CD4-positive, alpha-beta memory T cell (primary cell): ENCODE measurements at regions of chr6 and their contacts with region 1.

Region 1: DNA sequence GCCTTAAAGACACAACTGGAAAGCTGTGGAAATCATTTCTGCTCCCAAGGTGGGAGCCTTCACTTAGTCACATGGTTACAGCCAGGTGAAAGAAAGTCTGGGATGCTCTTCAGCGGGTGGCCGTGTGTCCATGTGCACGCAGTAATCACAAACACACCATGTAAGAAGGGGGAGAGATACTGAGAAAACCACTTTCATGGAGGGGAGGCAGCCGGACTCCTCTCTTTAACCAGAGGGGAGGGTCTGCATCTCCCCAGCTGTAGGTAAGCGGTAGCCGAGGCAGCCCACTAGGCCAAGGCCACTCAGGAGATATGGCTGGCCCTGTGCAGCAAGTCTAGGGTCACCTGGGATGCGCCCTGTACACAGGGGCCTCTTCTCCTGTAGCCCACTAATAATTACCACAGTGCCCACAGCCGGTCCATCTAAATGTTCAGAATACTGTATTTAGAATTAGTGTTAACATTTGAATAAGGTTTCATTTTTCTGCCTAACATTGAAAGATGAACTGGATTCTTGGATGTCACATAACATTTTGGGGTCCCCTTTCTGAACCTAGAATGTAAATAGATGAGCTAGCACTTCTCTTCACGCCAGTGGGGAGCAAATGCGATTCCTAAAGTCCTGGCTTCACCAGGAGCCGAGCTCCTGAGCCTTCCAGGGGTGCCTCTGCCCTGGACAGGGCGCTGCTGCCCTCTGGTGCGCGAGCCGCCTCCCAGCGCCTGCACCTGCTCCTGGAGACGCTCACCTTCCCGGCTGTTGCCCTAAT is 15.9 kb downstream of the GPR31 start:
- DNase-seq: peak in 4 of 5 donors; percentile 54 to 62 (median 56)
- H3K4me3 ChIP-seq: no peak overlapping the region
- H3K4me3 Mint-ChIP-seq: peak overlapping the region in 2 of 8 donors; percentile 63 to 69
- H3K27ac ChIP-seq: no peak overlapping the region
- H3K27ac Mint-ChIP-seq: peak overlapping the region; percentile 72 to 91 (median 81)
- H3K4me1 ChIP-seq: peaks cover 17% of the 10 kb centered on the region
- H3K4me1 Mint-ChIP-seq: peaks cover 24 to 51% (median 29%) of the 10 kb centered on the region in 4 donors
- H3K27me3 ChIP-seq: no peaks in the 10 kb centered on the region
- H3K27me3 Mint-ChIP-seq: peaks cover 0 to 2% of the 10 kb centered on the region in 2 donors

Region 2: DNA sequence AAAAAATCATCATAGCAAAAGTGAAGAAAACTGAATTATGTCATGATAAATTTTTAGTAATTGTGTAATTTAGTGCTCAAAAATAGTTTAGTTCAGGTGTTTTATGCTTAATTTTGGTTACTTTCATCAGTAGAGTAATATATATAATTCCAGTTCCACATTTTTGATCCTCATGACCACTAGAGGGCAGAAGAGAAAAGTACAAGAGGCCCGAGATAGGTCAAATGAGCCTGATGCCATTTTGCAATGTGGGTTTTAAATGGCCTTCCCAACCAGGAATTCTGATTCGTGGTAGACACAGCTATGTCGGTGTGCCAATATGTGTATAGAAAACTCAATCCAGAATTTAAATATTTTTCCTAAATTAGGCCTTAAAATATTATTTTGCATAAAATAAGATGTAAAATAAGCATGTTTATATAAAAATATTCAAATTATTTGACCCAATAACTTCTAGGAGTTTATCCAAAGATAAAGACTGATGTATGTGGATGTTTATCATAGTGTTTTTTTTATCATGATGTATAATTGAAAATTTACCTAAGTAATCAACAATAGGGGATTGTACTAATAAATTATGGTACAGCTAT is 355.1 kb before region 1 on chr6:
- CTCF ChIA-PET with region 1: interaction called, 23 read pairs
- POLR2A ChIA-PET with region 1: no interaction called
- intact Hi-C with region 1: loop called (anchors 1 kb)
- DNase-seq: peak in 4 of 5 donors; percentile 60 to 66 (median 62)
- H3K4me3 ChIP-seq: no peak overlapping the region
- H3K4me3 Mint-ChIP-seq: no peak overlapping the region
- H3K27ac ChIP-seq: no peak overlapping the region
- H3K27ac Mint-ChIP-seq: no peak overlapping the region
- H3K4me1 ChIP-seq: no peaks in the 10 kb centered on the region
- H3K4me1 Mint-ChIP-seq: no peaks in the 10 kb centered on the region
- H3K27me3 ChIP-seq: no peaks in the 10 kb centered on the region
- H3K27me3 Mint-ChIP-seq: no peaks in the 10 kb centered on the region

Region 3: GRCh38 chr6:166900956-166901607 is 240.8 kb before region 1 on chr6:
- CTCF ChIA-PET with region 1: no interaction called
- POLR2A ChIA-PET with region 1: no interaction called
- intact Hi-C with region 1: no loop called
- DNase-seq: no peak
- H3K4me3 ChIP-seq: no peak overlapping the region
- H3K4me3 Mint-ChIP-seq: no peak overlapping the region
- H3K27ac ChIP-seq: no peak overlapping the region
- H3K27ac Mint-ChIP-seq: peak overlapping the region in 1 of 7 donors; percentile 75
- H3K4me1 ChIP-seq: no peaks in the 10 kb centered on the region
- H3K4me1 Mint-ChIP-seq: peaks cover 0 to 10% (median under 1%) of the 10 kb centered on the region in 4 donors
- H3K27me3 ChIP-seq: no peaks in the 10 kb centered on the region
- H3K27me3 Mint-ChIP-seq: no peaks in the 10 kb centered on the region

Region 4: GRCh38 chr6:166999145-166999883 is 142.5 kb before region 1 on chr6 and contains the start of gene CEP43:
- CTCF ChIA-PET with region 1: interaction called, 40 read pairs
- POLR2A ChIA-PET with region 1: interaction called, 6 read pairs
- intact Hi-C with region 1: loop called (anchors 1 kb)
- DNase-seq: peak; percentile 81 to 89 (median 87)
- H3K4me3 ChIP-seq: peak within 1 kb of the TSS; percentile 85 to 95
- H3K4me3 Mint-ChIP-seq: peak within 1 kb of the TSS; percentile 90 to 95 (median 94)
- H3K27ac ChIP-seq: peak within 1 kb of the TSS; percentile 81
- H3K27ac Mint-ChIP-seq: peak within 1 kb of the TSS; percentile 65 to 93 (median 91)
- H3K4me1 ChIP-seq: peaks cover 38% of the 10 kb centered on the region
- H3K4me1 Mint-ChIP-seq: peaks cover 21 to 35% (median 30%) of the 10 kb centered on the region in 4 donors
- H3K27me3 ChIP-seq: no peaks in the 10 kb centered on the region
- H3K27me3 Mint-ChIP-seq: no peaks in the 10 kb centered on the region
- total RNA-seq, gene CEP43: 19.5 to 24.9 TPM

Region 5: GRCh38 chr6:167047554-167047953 is 94.3 kb before region 1 on chr6:
- CTCF ChIA-PET with region 1: interaction called, 13 read pairs
- POLR2A ChIA-PET with region 1: interaction called, 5 read pairs
- intact Hi-C with region 1: no loop called
- DNase-seq: peak; percentile 49 to 67 (median 64)
- H3K4me3 ChIP-seq: peak overlapping the region in 1 of 2 donors; percentile 28
- H3K4me3 Mint-ChIP-seq: peak overlapping the region; percentile 56 to 82 (median 71)
- H3K27ac ChIP-seq: peak overlapping the region; percentile 30
- H3K27ac Mint-ChIP-seq: peak overlapping the region; percentile 64 to 97 (median 85)
- H3K4me1 ChIP-seq: peaks cover 49% of the 10 kb centered on the region
- H3K4me1 Mint-ChIP-seq: peaks cover 26 to 57% (median 39%) of the 10 kb centered on the region in 4 donors
- H3K27me3 ChIP-seq: no peaks in the 10 kb centered on the region
- H3K27me3 Mint-ChIP-seq: no peaks in the 10 kb centered on the region

Region 6: DNA sequence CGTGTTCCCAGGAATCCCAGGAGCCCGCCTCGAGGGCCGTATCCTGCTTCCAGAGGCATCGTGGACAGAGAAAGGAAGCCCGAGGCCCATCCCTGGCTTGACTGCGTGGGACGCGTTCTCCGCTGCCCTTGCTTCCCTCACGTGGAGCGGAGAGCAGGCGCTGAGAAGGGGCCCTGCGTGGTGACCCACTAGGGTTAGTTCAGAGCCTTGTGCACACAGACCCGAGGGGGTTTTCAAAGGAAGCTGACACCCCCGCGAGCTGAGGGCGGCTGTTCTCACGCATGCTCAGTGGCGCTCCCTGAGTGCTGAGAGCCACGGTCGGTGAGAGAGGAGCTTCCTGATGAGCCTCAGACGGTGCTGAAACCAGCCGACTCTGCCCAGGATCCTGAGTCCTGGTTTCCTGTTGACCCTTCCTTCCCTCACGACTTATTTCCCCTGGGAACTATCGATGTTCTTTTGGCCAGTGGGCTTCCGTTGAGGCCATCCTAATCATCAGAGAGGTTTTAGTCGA is 47.9 kb before region 1 on chr6:
- CTCF ChIA-PET with region 1: interaction called, 8 read pairs
- POLR2A ChIA-PET with region 1: interaction called, 3 read pairs
- intact Hi-C with region 1: loop called (anchors 5 kb)
- DNase-seq: peak; percentile 72 to 86 (median 74)
- H3K4me3 ChIP-seq: peak overlapping the region in 1 of 2 donors; percentile 40
- H3K4me3 Mint-ChIP-seq: peak overlapping the region; percentile 78 to 91 (median 83)
- H3K27ac ChIP-seq: peak overlapping the region; percentile 62
- H3K27ac Mint-ChIP-seq: peak overlapping the region; percentile 91 to 98 (median 95)
- H3K4me1 ChIP-seq: peaks cover 75% of the 10 kb centered on the region
- H3K4me1 Mint-ChIP-seq: peaks cover 53 to 87% (median 72%) of the 10 kb centered on the region in 4 donors
- H3K27me3 ChIP-seq: no peaks in the 10 kb centered on the region
- H3K27me3 Mint-ChIP-seq: no peaks in the 10 kb centered on the region